ENCODE measurements at regions of chr3 and their contacts with region 1.

Region 1: DNA sequence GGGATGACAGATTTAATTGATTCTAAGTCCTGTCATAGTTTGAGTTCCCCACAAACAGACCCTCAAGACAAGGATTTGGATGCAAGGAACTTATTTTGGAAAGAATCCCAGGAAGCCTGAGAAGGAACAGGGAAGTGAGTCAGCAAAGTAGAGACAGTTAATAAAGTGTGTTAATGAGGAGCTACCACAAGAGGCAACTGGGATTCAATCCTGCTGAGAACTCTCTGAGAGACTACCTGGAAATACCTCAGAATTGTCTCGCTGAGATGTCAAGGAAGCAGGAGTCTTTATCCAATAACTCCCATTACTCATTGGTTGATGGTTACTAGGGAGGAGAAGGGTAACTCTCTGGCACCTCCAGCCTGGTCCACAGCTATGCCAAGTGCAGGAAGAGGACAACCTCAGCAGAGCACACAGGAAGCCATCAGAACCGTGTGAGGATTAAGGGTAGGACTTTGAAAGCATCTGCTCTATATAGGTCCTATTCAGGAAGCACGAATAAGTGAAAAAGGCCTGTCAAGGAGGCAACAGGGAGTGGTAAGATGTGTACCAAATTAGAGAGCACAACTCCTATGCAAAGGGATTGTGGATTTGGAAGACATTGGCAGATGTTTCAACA is 311.1 kb upstream of the KCNH8 start:
- DNase-seq: no peak
- H3K4me3 ChIP-seq: no peak overlapping the region
- H3K27ac ChIP-seq: no peak overlapping the region
- H3K4me1 ChIP-seq: no peaks in the 10 kb centered on the region; a peak in 1 of 7 replicates
- H3K27me3 ChIP-seq: no peaks in the 10 kb centered on the region
- CTCF ChIP-seq: no peak
- EP300 ChIP-seq: no peak
- POLR2A ChIP-seq: no peak
- RAD21 ChIP-seq: no peak

Region 2: DNA sequence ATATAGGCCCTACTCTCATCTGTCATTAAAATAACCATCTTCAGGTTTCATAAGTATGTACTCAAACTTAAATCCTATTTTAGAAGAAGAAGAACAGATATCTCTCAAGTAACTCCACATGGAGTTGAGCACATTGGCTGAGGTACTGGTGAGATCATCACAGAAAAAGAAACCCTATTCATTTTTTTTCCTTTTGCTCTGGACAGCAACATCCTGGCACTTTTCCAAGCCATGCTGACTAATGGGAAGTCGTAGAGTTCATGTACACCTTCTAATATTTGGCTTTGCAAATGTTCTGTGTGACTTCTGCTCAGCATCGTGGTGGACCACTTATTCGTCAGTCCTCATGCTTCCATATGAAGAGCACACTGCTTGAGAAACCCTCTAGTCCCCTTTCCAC is 24.9 kb before region 1 on chr3:
- CTCF ChIA-PET with region 1: no interaction called
- POLR2A ChIA-PET with region 1: no interaction called
- DNase-seq: no peak
- H3K4me3 ChIP-seq: no peak overlapping the region
- H3K27ac ChIP-seq: no peak overlapping the region
- H3K4me1 ChIP-seq: no peaks in the 10 kb centered on the region
- H3K27me3 ChIP-seq: no peaks in the 10 kb centered on the region
- CTCF ChIP-seq: no peak
- EP300 ChIP-seq: no peak
- POLR2A ChIP-seq: no peak
- RAD21 ChIP-seq: no peak

Region 3: GRCh38 chr3:18847583-18848197 is 10.4 kb after region 1 on chr3:
- CTCF ChIA-PET with region 1: interaction called, 35 read pairs
- POLR2A ChIA-PET with region 1: no interaction called
- DNase-seq: no peak
- H3K4me3 ChIP-seq: no peak overlapping the region
- H3K27ac ChIP-seq: no peak overlapping the region
- H3K4me1 ChIP-seq: peaks cover 0 to 3% (median 2%) of the 10 kb centered on the region in 4 experiments; a peak in 1 of 7 replicates
- H3K27me3 ChIP-seq: no peaks in the 10 kb centered on the region
- CTCF ChIP-seq: peak in 2 of 3 experiments; percentile 34 to 38; a peak in 2 of 4 replicates
- EP300 ChIP-seq: no peak
- POLR2A ChIP-seq: no peak
- RAD21 ChIP-seq: peak; percentile 24 to 43

Region 4: DNA sequence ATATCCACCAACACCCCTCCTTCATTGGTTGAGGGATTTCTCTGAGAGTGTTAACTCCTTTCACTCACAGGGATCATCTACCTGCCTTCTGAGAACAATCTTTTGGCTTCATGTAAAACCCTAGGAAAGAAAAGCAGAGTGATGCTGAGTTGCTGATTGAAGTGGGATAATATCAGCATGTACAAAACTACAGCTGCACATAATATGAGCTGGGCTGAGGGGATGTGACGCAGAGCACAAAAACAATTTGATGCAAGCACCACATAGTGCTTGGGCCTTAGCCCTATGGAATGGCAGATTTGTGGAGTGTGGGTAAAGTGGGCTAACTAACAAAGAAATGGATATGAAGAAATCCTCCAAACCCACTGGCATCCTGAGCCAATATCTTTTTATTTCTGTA is 43.4 kb after region 1 on chr3:
- CTCF ChIA-PET with region 1: no interaction called
- POLR2A ChIA-PET with region 1: no interaction called
- DNase-seq: no peak
- H3K4me3 ChIP-seq: no peak overlapping the region
- H3K27ac ChIP-seq: no peak overlapping the region
- H3K4me1 ChIP-seq: no peaks in the 10 kb centered on the region
- H3K27me3 ChIP-seq: no peaks in the 10 kb centered on the region
- CTCF ChIP-seq: no peak
- EP300 ChIP-seq: no peak
- POLR2A ChIP-seq: no peak
- RAD21 ChIP-seq: no peak

Measured in H1 (cell line).